CD4-positive, alpha-beta T cell (primary cell): ENCODE measurements at regions of chr16 and their contacts with region 1.

Region 1: GRCh38 chr16:8567750-8568617 is 22.3 kb downstream of the TMEM114 start:
- DNase-seq: peak; percentile 58 to 90 (median 69)
- ATAC-seq: peak; percentile 92
- H3K4me3 ChIP-seq: no peak overlapping the region
- H3K4me3 Mint-ChIP-seq: no peak overlapping the region
- H3K27ac ChIP-seq: no peak overlapping the region
- H3K27ac Mint-ChIP-seq: peak overlapping the region; percentile 58
- H3K4me1 ChIP-seq: peaks cover 9% of the 10 kb centered on the region
- H3K4me1 Mint-ChIP-seq: peaks cover 10% of the 10 kb centered on the region
- H3K27me3 ChIP-seq: peaks cover 0 to 2% of the 10 kb centered on the region in 2 experiments
- H3K27me3 Mint-ChIP-seq: peaks cover 31% of the 10 kb centered on the region
- CTCF ChIP-seq: peak; percentile 99

Region 2: DNA sequence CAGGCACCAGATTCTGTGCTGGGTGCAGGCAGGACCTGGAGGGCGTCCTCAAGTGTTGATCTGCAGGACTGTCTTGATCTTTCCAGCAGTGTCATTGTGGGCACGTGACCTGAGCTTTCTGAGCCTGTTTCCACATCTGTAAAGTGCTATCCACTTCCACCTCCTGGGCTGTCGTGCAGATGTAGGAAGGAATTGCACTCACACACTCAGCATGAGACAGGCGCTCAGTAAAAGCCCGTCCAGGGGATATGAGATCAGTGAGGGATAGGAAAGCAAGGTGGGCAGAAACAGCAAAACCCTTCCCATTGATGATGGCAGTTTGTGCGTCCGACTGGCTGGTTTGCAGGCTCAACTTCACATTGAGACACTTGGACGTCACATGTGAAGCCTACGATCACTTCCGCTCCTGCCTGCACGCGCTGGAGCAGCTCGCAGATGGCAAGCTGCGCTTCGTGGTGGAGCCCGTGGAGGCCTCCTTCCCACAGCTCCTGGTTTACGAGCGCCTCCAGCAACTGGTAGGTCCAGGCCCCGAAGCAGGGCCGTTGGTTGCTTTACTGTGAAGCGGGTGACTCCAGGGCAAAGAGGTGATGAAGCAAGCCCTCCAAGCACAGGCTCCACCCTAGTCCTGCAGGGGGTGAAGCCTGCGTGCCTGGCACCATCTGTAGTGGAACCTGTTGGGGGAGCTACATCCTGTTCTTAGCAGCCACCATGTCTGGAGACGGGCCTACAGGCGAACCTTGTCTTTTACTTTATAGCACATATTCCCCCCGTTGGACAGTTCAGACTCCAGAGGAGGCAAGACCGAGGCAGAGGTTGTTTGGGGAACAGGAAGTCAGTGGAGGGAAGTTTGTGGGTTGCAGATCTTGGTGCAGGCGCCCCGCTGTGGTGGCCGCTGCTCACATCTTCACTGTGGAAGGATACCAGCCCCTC is 76.5 kb after region 1 on chr16:
- CTCF ChIA-PET with region 1: no interaction called
- POLR2A ChIA-PET with region 1: no interaction called
- intact Hi-C with region 1: loop called in 1 of 2 experiments (anchors 2 kb)
- DNase-seq: peak in 7 of 14 experiments; percentile 7 to 49 (median 27)
- ATAC-seq: peak; percentile 95
- H3K4me3 ChIP-seq: no peak overlapping the region
- H3K4me3 Mint-ChIP-seq: no peak overlapping the region
- H3K27ac ChIP-seq: peak overlapping the region; percentile 10 to 15
- H3K27ac Mint-ChIP-seq: peak overlapping the region; percentile 33
- H3K4me1 ChIP-seq: peaks cover 13% of the 10 kb centered on the region
- H3K4me1 Mint-ChIP-seq: peaks cover 18% of the 10 kb centered on the region
- H3K27me3 ChIP-seq: no peaks in the 10 kb centered on the region
- H3K27me3 Mint-ChIP-seq: no peaks in the 10 kb centered on the region
- CTCF ChIP-seq: peak; percentile 15

Region 3: GRCh38 chr16:8797364-8798173 is 229.6 kb after region 1 on chr16 and contains the starts of genes PMM2 and TMEM186:
- CTCF ChIA-PET with region 1: interaction called, 6 read pairs
- POLR2A ChIA-PET with region 1: no interaction called
- intact Hi-C with region 1: loop called in 1 of 2 experiments (anchors 2 kb)
- DNase-seq: peak; percentile 87 to 98 (median 93)
- ATAC-seq: peak; percentile 96
- H3K4me3 ChIP-seq: peak within 1 kb of the TSS; percentile 98
- H3K4me3 Mint-ChIP-seq: peak within 1 kb of the TSS; percentile 98
- H3K27ac ChIP-seq: peak within 1 kb of the TSS; percentile 82 to 83
- H3K27ac Mint-ChIP-seq: peak within 1 kb of the TSS; percentile 89
- H3K4me1 ChIP-seq: peaks cover 39% of the 10 kb centered on the region
- H3K4me1 Mint-ChIP-seq: peaks cover 48% of the 10 kb centered on the region
- H3K27me3 ChIP-seq: no peaks in the 10 kb centered on the region
- H3K27me3 Mint-ChIP-seq: no peaks in the 10 kb centered on the region
- CTCF ChIP-seq: no peak
- total RNA-seq, gene PMM2: 24.2 to 27.0 TPM
- total RNA-seq, gene TMEM186: 1.9 to 3.1 TPM

Region 4: DNA sequence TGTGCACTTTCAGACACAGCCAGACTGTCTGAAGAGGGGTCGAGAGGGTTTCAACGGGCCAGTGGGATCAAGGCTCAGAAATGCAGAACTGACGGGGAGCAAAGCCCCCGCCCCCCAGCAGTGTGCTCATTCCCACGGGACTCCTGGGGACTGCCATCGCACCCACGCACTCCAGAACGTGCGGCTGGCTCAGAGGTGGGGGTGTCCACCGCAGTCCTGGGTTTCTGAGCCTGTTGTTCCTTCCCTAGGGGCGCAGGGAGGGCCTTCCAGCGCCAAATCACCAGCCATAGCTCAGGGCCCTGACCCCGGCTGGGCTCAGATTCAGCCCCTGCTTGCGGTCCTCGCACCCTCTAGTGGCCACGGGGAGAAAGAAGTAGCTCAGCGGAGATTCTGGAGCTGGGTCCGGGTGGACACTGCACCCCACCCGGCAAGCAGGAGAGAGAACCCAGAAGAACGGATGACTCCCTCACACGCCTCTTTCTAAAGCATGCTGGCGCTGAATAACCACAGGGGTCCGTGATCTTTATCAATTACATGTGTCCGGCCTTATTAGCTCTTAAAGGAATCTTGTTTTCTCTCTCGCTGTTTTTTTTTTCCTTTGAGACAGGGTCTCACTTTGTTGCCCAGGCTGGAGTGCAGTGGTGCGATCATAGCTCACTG is 440.7 kb after region 1 on chr16:
- CTCF ChIA-PET with region 1: interaction called, 6 read pairs
- POLR2A ChIA-PET with region 1: no interaction called
- intact Hi-C with region 1: loop called (anchors 1 to 2 kb)
- DNase-seq: peak; percentile 47 to 79 (median 60)
- ATAC-seq: peak; percentile 79
- H3K4me3 ChIP-seq: peak overlapping the region; percentile 20
- H3K4me3 Mint-ChIP-seq: no peak overlapping the region
- H3K27ac ChIP-seq: no peak overlapping the region
- H3K27ac Mint-ChIP-seq: no peak overlapping the region
- H3K4me1 ChIP-seq: peaks cover 12% of the 10 kb centered on the region
- H3K4me1 Mint-ChIP-seq: peaks cover 4% of the 10 kb centered on the region
- H3K27me3 ChIP-seq: peaks cover 7% of the 10 kb centered on the region in 2 experiments
- H3K27me3 Mint-ChIP-seq: peaks cover 12% of the 10 kb centered on the region
- CTCF ChIP-seq: peak; percentile 71

Region 5: DNA sequence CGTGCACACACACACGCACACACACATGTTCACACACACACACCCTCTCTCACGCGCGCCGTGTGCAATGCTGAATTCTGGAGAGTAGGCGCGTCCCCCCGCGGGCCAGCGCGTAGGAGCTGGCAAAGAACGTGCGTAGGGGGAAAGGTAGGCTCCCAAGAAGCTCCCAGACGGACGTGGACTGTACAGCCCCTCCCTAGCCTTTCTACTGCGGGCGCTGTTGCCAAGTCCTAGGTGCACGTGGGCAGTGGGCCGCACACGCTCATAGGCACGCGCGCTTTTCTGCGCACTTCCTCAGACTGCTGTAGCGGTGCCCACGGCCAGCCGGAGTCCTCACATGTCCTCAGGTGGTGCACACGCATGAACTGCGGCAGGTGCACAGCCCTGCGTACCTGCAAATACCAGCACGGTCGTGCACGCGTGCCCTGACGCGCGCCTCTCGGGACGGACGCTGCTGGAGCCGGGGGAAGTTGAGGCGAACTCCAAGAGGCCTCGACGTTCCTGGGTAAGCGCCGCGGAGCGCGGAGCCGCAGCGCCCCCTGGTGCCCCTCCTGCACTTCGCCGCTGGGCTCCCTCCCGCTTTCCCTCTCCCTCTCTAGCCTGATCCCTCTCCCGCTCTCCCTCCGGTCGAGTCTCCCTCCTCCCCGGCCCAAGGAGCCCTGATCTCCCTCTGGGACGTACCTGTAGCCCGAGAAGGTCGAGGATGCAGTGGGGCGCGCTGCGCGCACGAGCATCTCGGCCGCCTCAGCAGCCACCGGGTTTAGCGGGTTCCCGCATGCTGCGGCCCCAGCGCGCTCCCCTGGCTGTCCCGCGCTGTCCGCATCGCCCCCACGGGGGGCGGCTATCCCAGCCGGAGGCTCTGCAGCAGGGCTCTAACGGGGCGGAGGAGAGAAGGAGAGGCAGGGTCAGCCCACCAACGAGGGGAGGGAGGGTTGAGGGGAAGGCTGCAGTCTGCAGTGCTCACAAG is 1613.5 kb after region 1 on chr16:
- CTCF ChIA-PET with region 1: no interaction called
- POLR2A ChIA-PET with region 1: no interaction called
- intact Hi-C with region 1: loop called in 1 of 2 experiments (anchors 5 kb)
- DNase-seq: peak in 3 of 14 experiments; percentile 4 to 36 (median 32)
- ATAC-seq: no peak
- H3K4me3 ChIP-seq: no peak overlapping the region
- H3K4me3 Mint-ChIP-seq: no peak overlapping the region
- H3K27ac ChIP-seq: no peak overlapping the region
- H3K27ac Mint-ChIP-seq: no peak overlapping the region
- H3K4me1 ChIP-seq: peaks cover 14% of the 10 kb centered on the region
- H3K4me1 Mint-ChIP-seq: peaks cover 4% of the 10 kb centered on the region
- H3K27me3 ChIP-seq: peaks cover 35 to 44% of the 10 kb centered on the region in 2 experiments
- H3K27me3 Mint-ChIP-seq: peaks cover 64% of the 10 kb centered on the region
- CTCF ChIP-seq: peak; percentile 24

Region 6: DNA sequence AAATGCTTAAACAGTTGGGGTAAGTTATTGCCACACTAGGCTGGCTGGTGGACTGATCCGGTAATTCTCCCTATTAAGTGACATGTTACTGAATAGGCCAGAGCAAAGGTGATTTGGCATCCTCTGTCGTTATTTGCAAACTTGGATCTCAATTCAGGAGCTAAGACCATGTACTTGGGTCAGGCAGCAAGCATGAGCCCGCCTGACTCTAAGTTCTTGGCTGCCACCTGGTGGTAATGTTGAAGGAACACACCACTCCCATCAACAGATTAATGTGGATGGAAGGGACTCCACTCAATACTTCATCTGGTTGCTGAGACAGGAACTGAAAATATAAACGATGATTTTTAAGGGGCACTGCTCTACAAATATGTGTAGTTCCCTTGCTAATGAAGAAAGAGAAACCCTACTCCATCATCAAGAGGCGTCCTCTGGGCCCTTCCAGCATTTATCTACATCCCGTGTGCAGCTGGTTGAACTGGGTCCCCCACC is 1941.6 kb after region 1 on chr16:
- CTCF ChIA-PET with region 1: no interaction called
- POLR2A ChIA-PET with region 1: no interaction called
- intact Hi-C with region 1: loop called in 1 of 2 experiments (anchors 1 kb)
- DNase-seq: peak; percentile 29 to 86 (median 50)
- ATAC-seq: peak; percentile 88
- H3K4me3 ChIP-seq: no peak overlapping the region
- H3K4me3 Mint-ChIP-seq: no peak overlapping the region
- H3K27ac ChIP-seq: no peak overlapping the region
- H3K27ac Mint-ChIP-seq: no peak overlapping the region
- H3K4me1 ChIP-seq: peaks cover 4% of the 10 kb centered on the region
- H3K4me1 Mint-ChIP-seq: peaks cover 8% of the 10 kb centered on the region
- H3K27me3 ChIP-seq: peaks cover 0 to 5% of the 10 kb centered on the region in 2 experiments
- H3K27me3 Mint-ChIP-seq: no peaks in the 10 kb centered on the region
- CTCF ChIP-seq: peak; percentile 86